CD8-positive, alpha-beta memory T cell (primary cell): ENCODE measurements at regions of chr2 and their contacts with region 1.

Region 1: GRCh38 chr2:38697125-38697840 is 31.4 kb downstream of the GALM start:
- DNase-seq: peak in 4 of 5 donors; percentile 38 to 83 (median 60)
- H3K4me3 ChIP-seq: no peak overlapping the region
- H3K4me3 Mint-ChIP-seq: peak overlapping the region; percentile 60 to 81 (median 72)
- H3K27ac ChIP-seq: peak overlapping the region; percentile 61
- H3K27ac Mint-ChIP-seq: peak overlapping the region; percentile 93 to 100 (median 97)
- H3K4me1 ChIP-seq: peaks cover 60% of the 10 kb centered on the region
- H3K4me1 Mint-ChIP-seq: peaks cover 74 to 91% (median 90%) of the 10 kb centered on the region in 3 donors
- H3K27me3 ChIP-seq: no peaks in the 10 kb centered on the region
- H3K27me3 Mint-ChIP-seq: no peaks in the 10 kb centered on the region

Region 2: DNA sequence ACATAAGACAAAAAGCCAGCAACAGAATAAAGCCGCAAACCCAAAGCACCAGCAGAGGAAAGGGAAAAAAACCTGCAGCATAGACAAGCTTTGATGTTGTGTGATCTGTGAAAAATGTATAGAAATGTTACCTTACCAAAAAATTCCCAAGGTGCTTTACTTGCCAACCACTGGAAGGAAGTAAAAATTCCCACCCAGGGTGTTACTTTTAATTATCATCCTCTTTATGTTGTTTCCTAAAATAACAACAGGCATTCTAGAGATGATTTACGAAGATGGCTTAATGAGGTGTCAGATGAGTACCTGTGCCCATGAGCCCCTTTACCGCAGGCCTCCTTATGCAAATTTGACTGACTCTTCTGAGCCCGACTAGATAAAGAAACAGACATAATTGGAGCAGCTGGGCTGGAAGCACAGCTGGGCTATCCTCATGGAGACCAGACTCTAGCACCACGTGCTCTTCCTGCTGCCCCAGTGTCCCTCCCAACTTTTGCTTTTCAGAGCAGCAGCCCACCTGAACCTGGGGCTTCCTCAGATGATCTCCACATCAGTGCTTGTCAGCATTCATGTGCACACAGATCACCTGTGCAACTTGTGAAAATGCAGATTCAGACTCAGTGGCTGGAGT is 12.4 kb after region 1 on chr2:
- CTCF ChIA-PET with region 1: interaction called, 11 read pairs
- POLR2A ChIA-PET with region 1: interaction called, 6 read pairs
- DNase-seq: peak in 4 of 5 donors; percentile 36 to 80 (median 68)
- H3K4me3 ChIP-seq: peak overlapping the region; percentile 40
- H3K4me3 Mint-ChIP-seq: peak overlapping the region; percentile 68 to 81 (median 77)
- H3K27ac ChIP-seq: peak overlapping the region; percentile 32
- H3K27ac Mint-ChIP-seq: peak overlapping the region; percentile 92 to 99 (median 96)
- H3K4me1 ChIP-seq: peaks cover 34% of the 10 kb centered on the region
- H3K4me1 Mint-ChIP-seq: peaks cover 64 to 86% (median 76%) of the 10 kb centered on the region in 3 donors
- H3K27me3 ChIP-seq: no peaks in the 10 kb centered on the region
- H3K27me3 Mint-ChIP-seq: no peaks in the 10 kb centered on the region

Region 3: DNA sequence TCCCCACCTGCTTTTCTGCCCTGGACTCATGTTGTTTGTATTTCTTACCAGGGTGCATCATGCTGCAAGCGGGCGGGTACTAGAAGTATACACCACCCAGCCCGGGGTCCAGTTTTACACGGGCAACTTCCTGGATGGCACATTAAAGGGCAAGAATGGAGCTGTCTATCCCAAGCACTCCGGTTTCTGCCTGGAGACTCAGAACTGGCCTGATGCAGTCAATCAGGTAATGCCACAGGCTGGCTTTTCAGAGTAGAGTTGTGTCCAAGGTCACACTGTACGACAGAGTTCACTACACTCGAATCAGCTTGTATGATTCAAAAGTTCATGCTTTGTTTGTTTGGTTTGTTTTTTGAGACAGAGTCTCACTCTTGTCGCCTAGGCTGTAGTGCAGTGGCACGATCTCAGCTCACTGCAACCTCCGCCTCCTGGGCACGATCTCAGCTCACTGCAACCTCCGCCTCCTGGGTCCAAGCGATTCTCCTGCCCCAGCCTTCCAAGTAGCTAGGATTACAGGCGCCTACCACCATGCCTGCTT is 34.5 kb after region 1 on chr2:
- CTCF ChIA-PET with region 1: no interaction called
- POLR2A ChIA-PET with region 1: no interaction called
- DNase-seq: no peak
- H3K4me3 ChIP-seq: no peak overlapping the region
- H3K4me3 Mint-ChIP-seq: no peak overlapping the region
- H3K27ac ChIP-seq: no peak overlapping the region
- H3K27ac Mint-ChIP-seq: peak overlapping the region in 2 of 8 donors; percentile 72 to 92
- H3K4me1 ChIP-seq: no peaks in the 10 kb centered on the region
- H3K4me1 Mint-ChIP-seq: peaks cover 0 to 6% (median 6%) of the 10 kb centered on the region in 3 donors
- H3K27me3 ChIP-seq: no peaks in the 10 kb centered on the region
- H3K27me3 Mint-ChIP-seq: no peaks in the 10 kb centered on the region